CD8-positive, alpha-beta memory T cell (primary cell): ENCODE measurements at regions of chr1 and their contacts with region 1.

Region 1: DNA sequence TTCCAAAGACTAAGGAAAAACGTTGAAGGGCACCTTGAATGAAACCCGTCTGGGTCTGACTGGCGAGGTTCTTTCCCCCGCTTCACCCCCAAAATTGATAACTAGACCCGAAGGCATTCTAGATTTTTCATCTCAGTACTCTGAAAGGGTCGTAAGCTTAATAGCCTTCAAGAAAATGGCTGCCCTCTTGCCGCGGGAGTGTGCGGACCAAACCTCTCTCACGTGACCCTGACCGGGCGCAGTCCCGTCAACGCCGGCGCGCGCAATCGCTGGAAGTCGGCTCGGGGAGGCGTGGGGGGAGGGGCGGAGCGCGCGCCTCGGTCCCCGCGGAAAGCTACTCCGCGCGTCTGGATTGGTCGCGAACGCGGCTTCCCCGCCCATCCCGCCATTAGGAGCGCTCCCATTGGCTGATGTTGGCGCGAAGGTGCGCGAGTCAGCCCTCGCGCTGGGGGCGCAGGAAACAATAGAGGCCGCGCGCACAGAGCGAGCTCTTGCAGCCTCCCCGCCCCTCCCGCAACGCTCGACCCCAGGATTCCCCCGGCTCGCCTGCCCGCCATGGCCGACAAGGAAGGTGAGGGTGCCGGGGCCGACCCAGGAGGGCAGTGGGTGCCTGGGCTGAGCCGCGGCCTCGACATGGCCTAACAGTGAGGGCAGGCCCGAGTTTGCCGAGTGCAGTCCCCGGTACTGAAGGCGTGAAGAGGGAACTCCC is at the start of gene RBBP4:
- DNase-seq: peak; percentile 97 to 99 (median 98)
- H3K4me3 ChIP-seq: peak within 1 kb of the TSS; percentile 91
- H3K4me3 Mint-ChIP-seq: peak within 1 kb of the TSS; percentile 87 to 98 (median 93)
- H3K27ac ChIP-seq: peak within 1 kb of the TSS; percentile 99
- H3K27ac Mint-ChIP-seq: peak within 1 kb of the TSS; percentile 96 to 100 (median 99)
- H3K4me1 ChIP-seq: peaks cover 52% of the 10 kb centered on the region
- H3K4me1 Mint-ChIP-seq: peaks cover 58 to 71% (median 71%) of the 10 kb centered on the region in 3 donors
- H3K27me3 ChIP-seq: no peaks in the 10 kb centered on the region
- H3K27me3 Mint-ChIP-seq: peaks cover 0 to 7% of the 10 kb centered on the region in 2 donors
- total RNA-seq, gene RBBP4: 289 to 301 TPM

Region 2: DNA sequence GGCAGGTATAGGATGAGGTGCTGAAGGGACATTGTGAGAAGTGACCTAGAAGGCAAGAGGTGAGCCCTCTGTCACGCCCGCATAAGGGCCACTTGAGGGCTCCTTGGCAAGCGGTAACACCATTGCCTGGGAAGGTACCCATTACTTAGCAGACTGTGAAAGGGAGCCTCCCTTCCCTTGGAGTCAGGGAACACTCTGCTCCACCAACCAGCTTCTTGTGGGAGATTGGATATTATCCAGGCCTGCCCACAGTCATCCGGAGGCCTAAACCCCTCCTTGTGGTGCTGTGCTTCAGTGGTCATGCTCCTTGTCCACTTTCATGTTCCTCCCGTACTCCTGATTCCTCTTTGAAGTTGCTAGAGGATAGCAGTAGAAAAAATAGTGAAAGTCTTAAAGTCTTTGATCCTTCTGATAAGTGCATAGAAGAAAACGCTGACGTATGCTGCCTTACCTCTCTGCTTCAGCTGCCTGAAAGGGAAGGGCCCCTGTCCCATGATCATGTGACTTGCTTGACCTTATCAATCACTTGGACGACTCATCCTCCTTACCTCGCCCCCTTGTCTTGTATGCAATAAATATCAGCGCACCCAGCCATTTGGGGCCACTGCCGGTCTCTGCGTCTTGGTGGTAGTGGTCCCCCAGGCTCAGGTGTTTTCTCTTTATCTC is 16.1 kb after region 1 on chr1:
- CTCF ChIA-PET with region 1: no interaction called
- POLR2A ChIA-PET with region 1: no interaction called
- DNase-seq: no peak
- H3K4me3 ChIP-seq: no peak overlapping the region
- H3K4me3 Mint-ChIP-seq: no peak overlapping the region
- H3K27ac ChIP-seq: no peak overlapping the region
- H3K27ac Mint-ChIP-seq: peak overlapping the region in 1 of 8 donors; percentile 44
- H3K4me1 ChIP-seq: no peaks in the 10 kb centered on the region
- H3K4me1 Mint-ChIP-seq: peaks cover 10 to 15% (median 13%) of the 10 kb centered on the region in 3 donors
- H3K27me3 ChIP-seq: no peaks in the 10 kb centered on the region
- H3K27me3 Mint-ChIP-seq: no peaks in the 10 kb centered on the region

Region 3: DNA sequence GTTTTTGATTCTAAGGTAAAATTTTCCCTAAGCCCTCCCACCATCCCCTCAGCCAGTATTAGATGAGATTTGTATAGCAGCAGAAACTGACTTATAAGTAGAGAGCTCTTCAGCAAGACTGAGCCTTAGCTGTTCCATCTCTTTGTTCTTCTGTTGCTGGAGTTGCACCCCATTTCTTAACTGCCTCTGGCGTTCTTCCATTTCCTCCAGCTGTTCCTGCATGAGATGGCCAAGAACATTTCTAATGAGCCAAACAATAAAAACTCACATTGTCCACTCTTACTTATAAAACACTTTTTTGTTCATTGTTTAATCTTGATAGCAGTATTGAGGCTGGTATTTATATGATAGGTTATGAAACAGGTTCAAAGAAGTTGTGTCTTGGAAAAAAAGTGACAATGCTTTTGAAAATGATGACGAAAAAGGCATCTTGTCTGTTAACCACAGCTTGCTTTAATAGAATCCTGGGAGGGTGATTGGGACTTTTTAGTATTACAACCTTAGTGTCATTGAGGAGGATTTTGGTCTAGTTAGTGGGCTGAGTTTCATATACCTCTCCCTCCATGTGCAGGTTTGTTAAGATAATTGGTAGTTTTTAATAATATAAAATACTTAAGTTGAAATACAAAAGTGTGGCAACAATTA is 33.4 kb after region 1 on chr1:
- CTCF ChIA-PET with region 1: no interaction called
- POLR2A ChIA-PET with region 1: no interaction called
- DNase-seq: no peak
- H3K4me3 ChIP-seq: no peak overlapping the region
- H3K4me3 Mint-ChIP-seq: no peak overlapping the region
- H3K27ac ChIP-seq: no peak overlapping the region
- H3K27ac Mint-ChIP-seq: peak overlapping the region in 4 of 8 donors; percentile 7 to 71 (median 28)
- H3K4me1 ChIP-seq: no peaks in the 10 kb centered on the region
- H3K4me1 Mint-ChIP-seq: no peaks in the 10 kb centered on the region
- H3K27me3 ChIP-seq: no peaks in the 10 kb centered on the region
- H3K27me3 Mint-ChIP-seq: no peaks in the 10 kb centered on the region

Region 4: GRCh38 chr1:32703479-32704291 is 52.8 kb after region 1 on chr1:
- CTCF ChIA-PET with region 1: no interaction called
- POLR2A ChIA-PET with region 1: no interaction called
- DNase-seq: no peak
- H3K4me3 ChIP-seq: no peak overlapping the region
- H3K4me3 Mint-ChIP-seq: peak overlapping the region; percentile 18 to 59 (median 38)
- H3K27ac ChIP-seq: peak overlapping the region; percentile 39
- H3K27ac Mint-ChIP-seq: peak overlapping the region in 2 of 8 donors; percentile 17 to 97
- H3K4me1 ChIP-seq: peaks cover 8% of the 10 kb centered on the region
- H3K4me1 Mint-ChIP-seq: peaks cover 7 to 13% (median 11%) of the 10 kb centered on the region in 3 donors
- H3K27me3 ChIP-seq: peaks cover 22% of the 10 kb centered on the region
- H3K27me3 Mint-ChIP-seq: peaks cover 27 to 46% of the 10 kb centered on the region in 2 donors

Region 5: DNA sequence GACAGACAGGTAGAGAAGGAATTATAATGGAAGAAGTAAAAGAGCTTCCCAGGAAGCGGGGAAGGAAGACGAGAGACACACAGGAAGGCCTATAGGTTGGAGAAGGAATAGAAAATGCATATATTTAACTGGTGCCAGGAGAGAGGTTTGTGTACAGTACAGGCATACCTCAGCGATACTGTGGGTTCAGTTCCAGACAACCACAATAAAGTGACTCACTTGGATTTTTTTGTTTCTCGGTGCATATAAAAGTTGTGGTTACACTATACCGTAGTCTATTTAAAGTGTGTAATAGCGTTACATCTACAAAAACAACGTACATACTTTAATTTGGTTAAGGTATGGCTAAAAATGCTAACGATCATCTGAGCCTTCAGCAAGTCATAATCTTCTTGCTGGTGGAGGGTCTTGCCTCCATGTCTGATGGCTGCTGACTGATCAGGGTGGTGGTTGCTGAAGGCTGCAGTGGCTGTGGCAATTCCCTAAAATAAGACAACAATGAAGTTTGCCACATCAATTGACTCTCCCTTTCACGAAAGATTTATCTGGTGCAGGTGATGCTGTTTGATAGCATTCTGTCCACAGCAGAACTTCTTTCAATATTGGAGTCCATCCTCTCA is 150.3 kb after region 1 on chr1:
- CTCF ChIA-PET with region 1: no interaction called
- POLR2A ChIA-PET with region 1: no interaction called
- DNase-seq: peak in 4 of 5 donors; percentile 6 to 75 (median 64)
- H3K4me3 ChIP-seq: no peak overlapping the region
- H3K4me3 Mint-ChIP-seq: peak overlapping the region; percentile 0 to 87 (median 75)
- H3K27ac ChIP-seq: no peak overlapping the region
- H3K27ac Mint-ChIP-seq: peak overlapping the region; percentile 79 to 96 (median 88)
- H3K4me1 ChIP-seq: peaks cover 54% of the 10 kb centered on the region
- H3K4me1 Mint-ChIP-seq: peaks cover 50 to 59% (median 55%) of the 10 kb centered on the region in 3 donors
- H3K27me3 ChIP-seq: no peaks in the 10 kb centered on the region
- H3K27me3 Mint-ChIP-seq: no peaks in the 10 kb centered on the region

Region 6: GRCh38 chr1:32817159-32817814 is 166.4 kb after region 1 on chr1 and contains the starts of genes S100PBP and YARS1:
- CTCF ChIA-PET with region 1: no interaction called
- POLR2A ChIA-PET with region 1: interaction called, 14 read pairs
- DNase-seq: peak; percentile 98 to 100 (median 99)
- H3K4me3 ChIP-seq: peak within 1 kb of the TSS; percentile 98
- H3K4me3 Mint-ChIP-seq: peak within 1 kb of the TSS; percentile 91 to 99 (median 97)
- H3K27ac ChIP-seq: peak within 1 kb of the TSS; percentile 93
- H3K27ac Mint-ChIP-seq: peak within 1 kb of the TSS; percentile 73 to 98 (median 92)
- H3K4me1 ChIP-seq: peaks cover 51% of the 10 kb centered on the region
- H3K4me1 Mint-ChIP-seq: peaks cover 64 to 76% (median 74%) of the 10 kb centered on the region in 3 donors
- H3K27me3 ChIP-seq: no peaks in the 10 kb centered on the region
- H3K27me3 Mint-ChIP-seq: no peaks in the 10 kb centered on the region
- total RNA-seq, gene S100PBP: 28.6 to 30.6 TPM
- total RNA-seq, gene YARS1: 205 to 219 TPM